Activated CD8-positive, alpha-beta memory T cell treated with anti-CD3 and anti-CD28 coated beads, Interleukin-2, amount 10 ng/mL, durations not matched to agents 7 days and 5 days (primary cell): ENCODE measurements at regions of chr18 and their contacts with region 1.

Region 1: GRCh38 chr18:74495581-74496507 is at the start of gene CNDP2:
- DNase-seq: peak; percentile 99
- ATAC-seq: peak; percentile 76
- H3K4me3 Mint-ChIP-seq: peak within 1 kb of the TSS; percentile 87
- H3K27ac Mint-ChIP-seq: peak within 1 kb of the TSS; percentile 100
- H3K4me1 Mint-ChIP-seq: peaks cover 40% of the 10 kb centered on the region
- H3K27me3 Mint-ChIP-seq: peaks cover 12% of the 10 kb centered on the region
- total RNA-seq, gene CNDP2: 141 to 176 TPM

Region 2: GRCh38 chr18:73646772-73647171 is 849.1 kb before region 1 on chr18:
- CTCF ChIA-PET with region 1: no interaction called
- DNase-seq: no peak
- ATAC-seq: no peak
- H3K4me3 Mint-ChIP-seq: no peak overlapping the region
- H3K27ac Mint-ChIP-seq: no peak overlapping the region
- H3K4me1 Mint-ChIP-seq: no peaks in the 10 kb centered on the region
- H3K27me3 Mint-ChIP-seq: no peaks in the 10 kb centered on the region

Region 3: GRCh38 chr18:74342416-74343043 is 153.3 kb before region 1 on chr18:
- CTCF ChIA-PET with region 1: interaction called, 134 read pairs
- DNase-seq: no peak
- ATAC-seq: no peak
- H3K4me3 Mint-ChIP-seq: no peak overlapping the region
- H3K27ac Mint-ChIP-seq: no peak overlapping the region
- H3K4me1 Mint-ChIP-seq: peaks cover 2% of the 10 kb centered on the region
- H3K27me3 Mint-ChIP-seq: peaks cover 26% of the 10 kb centered on the region

Region 4: GRCh38 chr18:74506425-74507119 is 10.7 kb after region 1 on chr18:
- CTCF ChIA-PET with region 1: no interaction called
- DNase-seq: no peak
- ATAC-seq: no peak
- H3K4me3 Mint-ChIP-seq: no peak overlapping the region
- H3K27ac Mint-ChIP-seq: no peak overlapping the region
- H3K4me1 Mint-ChIP-seq: peaks cover 12% of the 10 kb centered on the region
- H3K27me3 Mint-ChIP-seq: no peaks in the 10 kb centered on the region

Region 5: GRCh38 chr18:74551936-74552555 is 56.2 kb after region 1 on chr18:
- CTCF ChIA-PET with region 1: interaction called, 13 read pairs
- DNase-seq: peak; percentile 85
- ATAC-seq: peak; percentile 97
- H3K4me3 Mint-ChIP-seq: no peak overlapping the region
- H3K27ac Mint-ChIP-seq: no peak overlapping the region
- H3K4me1 Mint-ChIP-seq: peaks cover 2% of the 10 kb centered on the region
- H3K27me3 Mint-ChIP-seq: peaks cover 24% of the 10 kb centered on the region